ENCODE measurements at regions of chr1 and their contacts with region 1.

Region 1: GRCh38 chr1:202223121-202223860 is 29.7 kb downstream of the LGR6 start:
- DNase-seq: no peak
- ATAC-seq: no peak
- H3K4me3 ChIP-seq: no peak overlapping the region
- H3K27ac ChIP-seq: no peak overlapping the region
- H3K4me1 ChIP-seq: no peaks in the 10 kb centered on the region
- H3K27me3 ChIP-seq: no peaks in the 10 kb centered on the region
- CTCF ChIP-seq: no peak

Region 2: DNA sequence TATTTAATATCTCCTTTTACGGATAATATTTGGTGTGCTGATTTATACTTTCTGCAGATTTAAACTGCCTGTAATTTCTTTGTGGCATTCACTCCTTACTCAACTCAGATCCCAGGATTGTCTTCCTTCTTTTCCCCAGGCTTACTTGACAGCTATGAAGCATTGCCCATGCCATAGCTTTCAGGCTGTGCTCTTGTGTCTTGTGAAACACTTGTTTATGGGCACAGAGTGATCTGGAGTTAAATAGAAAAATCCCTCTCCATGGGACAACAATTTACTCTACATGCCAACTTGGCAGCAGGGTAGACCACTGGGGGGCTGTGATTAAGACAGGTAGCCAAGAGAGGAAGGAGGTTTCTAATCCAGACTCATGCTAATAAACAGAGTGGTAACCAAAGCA is 182.6 kb after region 1 on chr1:
- CTCF ChIA-PET with region 1: interaction called, 10 read pairs
- POLR2A ChIA-PET with region 1: no interaction called
- in situ Hi-C with region 1: no loop called
- intact Hi-C with region 1: no loop called
- DNase-seq: no peak
- ATAC-seq: no peak
- H3K4me3 ChIP-seq: no peak overlapping the region
- H3K27ac ChIP-seq: no peak overlapping the region
- H3K4me1 ChIP-seq: no peaks in the 10 kb centered on the region; the same call in 1 of the 2 replicates
- H3K27me3 ChIP-seq: no peaks in the 10 kb centered on the region
- CTCF ChIP-seq: no peak

Measured in Panc1 (cell line).